ENCODE measurements at regions of chr9 and their contacts with region 1.

Region 1: GRCh38 chr9:4301971-4302427 is 2.1 kb upstream of the GLIS3 start:
- DNase-seq: peak; percentile 79
- ATAC-seq: peak; percentile 56

Region 2: DNA sequence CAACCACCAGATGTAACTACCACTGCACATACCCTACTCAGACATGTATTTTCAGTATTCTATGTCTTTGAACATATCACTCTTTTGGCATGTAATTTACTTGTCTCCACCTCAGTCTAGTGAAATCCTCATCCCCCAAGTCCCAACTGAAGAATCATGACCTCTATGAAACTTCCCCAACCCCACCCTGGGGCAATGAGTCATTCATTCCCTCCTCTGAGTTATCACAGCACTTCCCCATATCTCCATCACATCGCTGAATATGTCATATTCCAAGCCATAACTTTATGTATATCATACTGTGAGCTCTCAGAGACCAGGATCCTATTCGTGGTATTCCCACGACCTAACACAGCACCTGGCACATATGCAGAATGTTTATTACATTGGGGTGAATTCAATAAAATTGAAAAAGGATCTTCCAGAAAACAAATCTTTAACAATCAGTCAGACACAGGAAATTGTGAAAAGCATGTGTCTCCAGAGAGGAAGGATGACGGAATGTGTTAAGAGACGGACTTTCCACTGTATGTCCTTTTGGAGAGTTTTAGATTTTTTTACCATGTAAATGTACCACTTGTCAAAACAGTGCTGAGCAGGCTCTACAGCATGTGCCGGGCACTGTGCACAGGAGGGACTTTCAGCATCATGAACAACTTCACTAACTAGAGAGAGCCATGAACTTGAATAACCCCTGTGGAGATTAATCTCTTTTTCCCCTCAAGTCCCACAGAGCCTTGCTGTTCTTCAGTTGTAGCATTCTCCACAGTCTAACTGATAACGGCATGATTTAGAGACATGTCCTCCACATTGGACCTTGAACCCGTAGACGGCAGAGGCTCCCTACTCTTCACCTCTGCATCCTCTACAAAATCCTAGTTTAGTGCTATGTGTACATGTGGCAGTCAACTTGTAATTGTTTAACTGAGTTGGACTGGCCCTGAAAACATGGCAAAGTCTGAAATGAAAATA is 215.6 kb before region 1 on chr9:
- intact Hi-C with region 1: loop called (anchors 10 kb)
- DNase-seq: no peak
- ATAC-seq: peak; percentile 77

Region 3: DNA sequence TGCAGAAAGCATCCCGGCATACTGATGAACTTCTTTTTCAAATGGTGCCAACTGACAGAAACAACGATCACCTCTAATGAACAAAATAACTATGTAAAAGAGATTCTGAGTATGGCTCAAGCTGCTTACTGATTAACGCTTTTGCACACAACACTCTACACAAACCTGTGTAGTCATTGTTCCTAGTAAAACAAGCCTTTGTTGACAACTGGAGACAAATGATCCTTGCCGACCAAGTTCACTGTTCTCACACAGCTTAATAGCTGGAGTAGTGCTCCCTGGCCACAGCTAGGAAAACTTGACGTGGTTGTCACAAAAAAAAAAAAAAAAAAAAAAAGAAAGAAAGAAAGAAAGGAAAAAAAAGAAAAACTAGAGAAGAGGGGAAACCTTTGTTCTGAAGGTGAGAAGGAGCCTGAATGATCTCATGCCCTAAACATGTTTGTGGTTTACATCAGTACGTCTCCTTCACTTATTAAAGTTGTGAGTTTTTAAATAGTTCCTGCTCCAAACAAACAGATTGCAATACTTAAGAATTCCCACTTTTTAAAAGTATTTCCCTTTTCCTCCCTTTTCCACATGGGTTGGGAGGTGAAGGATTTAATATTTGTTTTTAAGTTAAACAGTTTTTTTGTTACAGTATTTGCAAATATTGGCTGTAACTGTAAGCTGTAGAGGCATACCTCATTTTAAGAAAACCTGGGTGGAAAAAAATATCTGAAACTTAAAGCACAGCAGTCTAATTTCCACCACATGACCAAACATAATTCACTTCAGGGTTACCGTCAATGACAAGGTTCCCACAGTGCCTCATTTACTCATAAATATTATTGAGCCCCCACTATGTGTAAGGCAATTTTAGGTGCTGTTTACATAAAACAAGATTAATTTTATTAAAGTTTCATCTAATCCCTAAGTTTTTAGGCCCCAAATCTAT is 65.9 kb before region 1 on chr9:
- intact Hi-C with region 1: no loop called
- DNase-seq: no peak
- ATAC-seq: no peak

Region 4: GRCh38 chr9:4327504-4328191 is 25.6 kb after region 1 on chr9:
- intact Hi-C with region 1: no loop called
- DNase-seq: no peak
- ATAC-seq: no peak

Region 5: GRCh38 chr9:4339357-4339756 is 37.4 kb after region 1 on chr9:
- intact Hi-C with region 1: loop called (anchors 5 kb)
- DNase-seq: peak; percentile 89
- ATAC-seq: no peak